Left lung (tissue), 14 donors: ENCODE measurements at regions of chr7 and their contacts with region 1.

Region 1: GRCh38 chr7:108181073-108181985 is 51.2 kb upstream of the LAMB4 start:
- DNase-seq: peak in 2 of 4 donors; percentile 69 to 73
- ATAC-seq: peak; percentile 83
- H3K4me3 ChIP-seq: no peak overlapping the region
- H3K27ac ChIP-seq: no peak overlapping the region
- H3K4me1 ChIP-seq: no peaks in the 10 kb centered on the region
- H3K27me3 ChIP-seq: no peaks in the 10 kb centered on the region
- CTCF ChIP-seq: peak; percentile 66 to 68

Region 2: DNA sequence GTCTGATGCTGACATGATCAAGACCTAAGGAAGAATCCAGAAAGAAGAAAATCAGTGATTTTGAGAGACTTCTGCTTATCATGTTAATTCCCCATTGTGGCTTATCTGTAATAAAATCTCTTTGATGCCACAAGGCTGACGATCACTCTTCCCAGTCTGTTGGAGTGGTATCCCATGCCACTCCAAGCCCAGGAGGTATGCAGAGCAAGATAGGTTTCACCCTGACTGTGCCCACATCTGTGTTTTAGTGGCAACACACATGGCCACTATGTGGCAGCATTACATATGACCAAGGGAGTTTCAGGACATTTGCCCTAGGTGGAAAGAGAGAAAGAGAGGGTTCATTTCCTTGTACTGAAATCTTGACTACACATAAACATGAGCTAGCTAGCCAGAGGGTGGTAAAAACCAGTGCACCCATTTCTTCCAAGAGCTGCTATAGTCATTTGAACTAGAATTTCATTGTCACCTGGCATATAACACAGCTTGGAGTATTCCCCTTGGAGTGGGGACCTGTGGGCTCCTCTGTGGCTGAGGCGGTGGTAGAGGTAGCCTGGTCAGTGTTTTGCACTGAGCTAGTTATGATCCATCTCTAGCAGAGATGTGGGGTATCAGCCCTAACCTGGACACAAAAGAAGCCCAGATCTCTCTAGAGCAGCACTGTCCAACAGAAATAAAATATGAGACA is 72.0 kb before region 1 on chr7:
- intact Hi-C with region 1: no loop called
- DNase-seq: no peak
- ATAC-seq: peak; percentile 77
- H3K4me3 ChIP-seq: no peak overlapping the region
- H3K27ac ChIP-seq: no peak overlapping the region
- H3K4me1 ChIP-seq: peaks cover 0 to 6% of the 10 kb centered on the region in 2 donors
- H3K27me3 ChIP-seq: no peaks in the 10 kb centered on the region
- CTCF ChIP-seq: peak in 1 of 2 donors; percentile 29

Region 3: DNA sequence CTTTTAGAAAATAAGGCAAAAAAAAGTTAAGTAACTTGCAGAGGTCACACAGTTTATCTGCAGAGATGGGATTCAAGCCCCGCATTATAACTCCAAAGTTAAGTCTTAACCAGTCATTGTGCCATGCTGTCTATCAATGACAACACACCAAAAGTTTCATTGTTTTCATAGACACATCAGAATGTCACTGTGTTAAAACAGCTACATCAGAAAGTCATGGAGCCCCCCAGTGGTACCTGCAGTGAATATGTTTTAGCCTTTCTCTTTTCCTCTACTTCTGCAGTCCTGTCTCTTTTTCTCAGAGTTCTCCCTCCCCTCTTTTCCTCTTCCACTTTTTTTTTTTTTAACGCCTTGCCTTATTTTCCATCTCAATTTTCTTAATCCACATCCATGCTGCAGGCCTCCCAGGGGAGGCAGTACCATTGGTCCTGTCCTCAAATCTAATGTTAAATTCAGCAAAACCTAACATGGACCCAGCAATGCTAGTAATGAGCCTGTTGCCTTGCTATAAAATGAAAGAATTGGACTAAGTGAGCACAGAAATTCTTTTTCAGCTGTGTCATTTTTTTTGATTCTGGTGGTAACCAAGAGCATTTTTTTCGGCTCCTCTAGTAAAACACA is 278.7 kb after region 1 on chr7:
- intact Hi-C with region 1: loop called in 1 of 2 experiments (anchors 10 kb)
- DNase-seq: peak in 1 of 4 donors; percentile 33
- ATAC-seq: peak; percentile 34
- H3K4me3 ChIP-seq: no peak overlapping the region
- H3K27ac ChIP-seq: no peak overlapping the region
- H3K4me1 ChIP-seq: peaks cover 4 to 19% of the 10 kb centered on the region in 2 donors
- H3K27me3 ChIP-seq: peaks cover 36 to 64% of the 10 kb centered on the region in 2 donors
- CTCF ChIP-seq: peak in 1 of 2 donors; percentile 24

Region 4: DNA sequence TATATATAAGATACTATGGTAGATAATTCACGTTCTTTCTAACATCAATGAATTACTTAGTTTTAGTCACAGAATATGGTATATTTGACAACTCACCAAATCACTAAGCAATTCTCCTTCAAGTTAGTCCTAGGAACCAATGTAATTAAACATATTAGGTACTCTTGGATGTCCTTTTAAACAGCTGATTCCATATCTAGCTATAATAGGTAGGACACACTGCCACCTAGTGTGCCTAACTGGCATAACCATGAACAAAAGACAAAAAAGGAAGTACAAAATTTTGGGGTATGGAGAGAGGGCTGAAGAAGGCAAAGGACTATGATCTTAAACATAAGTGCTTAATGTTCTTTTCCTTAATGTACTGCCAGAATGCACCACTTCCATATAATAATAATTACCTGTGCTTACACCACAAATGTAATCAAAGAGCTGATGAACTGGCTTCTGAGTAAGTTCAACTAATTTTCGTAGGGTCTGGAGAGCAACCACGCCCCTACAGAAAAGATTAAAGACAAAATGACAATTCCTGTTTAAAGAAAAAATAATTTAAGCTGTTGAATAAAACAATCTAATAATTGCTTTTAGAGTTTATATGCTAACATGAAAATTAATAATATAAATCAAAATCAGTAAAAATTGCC is 315.9 kb after region 1 on chr7:
- intact Hi-C with region 1: loop called in 1 of 2 experiments (anchors 10 kb)
- DNase-seq: peak in 2 of 4 donors; percentile 30 to 61
- ATAC-seq: peak; percentile 88
- H3K4me3 ChIP-seq: no peak overlapping the region
- H3K27ac ChIP-seq: no peak overlapping the region
- H3K4me1 ChIP-seq: no peaks in the 10 kb centered on the region
- H3K27me3 ChIP-seq: no peaks in the 10 kb centered on the region
- CTCF ChIP-seq: peak; percentile 60 to 75